Activated CD4-positive, alpha-beta memory T cell treated with anti-CD3 and anti-CD28 coated beads, Interleukin-2, amount 10 ng/mL, durations not matched to agents 7 days and 5 days (primary cell): ENCODE measurements at regions of chr16 and their contacts with region 1.

Region 1: GRCh38 chr16:25111403-25112166 is at the start of gene LCMT1:
- DNase-seq: peak; percentile 94
- H3K4me3 Mint-ChIP-seq: peak within 1 kb of the TSS; percentile 93
- H3K27ac Mint-ChIP-seq: peak within 1 kb of the TSS; percentile 97
- H3K4me1 Mint-ChIP-seq: peaks cover 60% of the 10 kb centered on the region
- H3K27me3 Mint-ChIP-seq: no peaks in the 10 kb centered on the region
- total RNA-seq, gene LCMT1: 39.0 to 50.7 TPM

Region 2: GRCh38 chr16:25031441-25032307 is 79.9 kb before region 1 on chr16:
- CTCF ChIA-PET with region 1: interaction called, 4 read pairs
- POLR2A ChIA-PET with region 1: interaction called, 14 read pairs
- DNase-seq: peak; percentile 93
- H3K4me3 Mint-ChIP-seq: peak overlapping the region; percentile 84
- H3K27ac Mint-ChIP-seq: peak overlapping the region; percentile 90
- H3K4me1 Mint-ChIP-seq: peaks cover 30% of the 10 kb centered on the region
- H3K27me3 Mint-ChIP-seq: no peaks in the 10 kb centered on the region

Region 3: DNA sequence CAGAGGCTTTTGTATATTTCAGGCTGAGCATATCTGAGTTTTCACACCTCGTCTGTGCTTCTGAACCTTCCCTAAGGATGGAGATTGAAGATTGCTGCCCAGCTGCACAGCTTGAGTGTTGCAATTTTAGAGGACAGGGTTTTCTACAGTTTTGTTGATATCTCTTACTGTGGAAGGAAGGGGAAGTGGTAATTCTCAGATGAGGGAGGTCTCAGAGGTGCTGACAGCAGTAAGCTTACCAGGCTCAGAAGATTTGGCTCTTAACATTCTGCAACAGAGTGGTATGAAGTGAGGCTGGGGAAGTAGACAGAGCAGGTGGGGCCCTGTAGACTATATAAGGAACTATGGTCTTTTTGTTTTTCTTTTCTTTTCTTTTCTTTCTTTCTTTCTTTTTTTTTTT is 50.7 kb before region 1 on chr16:
- CTCF ChIA-PET with region 1: interaction called, 20 read pairs
- POLR2A ChIA-PET with region 1: interaction called, 112 read pairs
- DNase-seq: peak; percentile 50
- H3K4me3 Mint-ChIP-seq: peak overlapping the region; percentile 56
- H3K27ac Mint-ChIP-seq: peak overlapping the region; percentile 93
- H3K4me1 Mint-ChIP-seq: peaks cover 45% of the 10 kb centered on the region
- H3K27me3 Mint-ChIP-seq: no peaks in the 10 kb centered on the region

Region 4: DNA sequence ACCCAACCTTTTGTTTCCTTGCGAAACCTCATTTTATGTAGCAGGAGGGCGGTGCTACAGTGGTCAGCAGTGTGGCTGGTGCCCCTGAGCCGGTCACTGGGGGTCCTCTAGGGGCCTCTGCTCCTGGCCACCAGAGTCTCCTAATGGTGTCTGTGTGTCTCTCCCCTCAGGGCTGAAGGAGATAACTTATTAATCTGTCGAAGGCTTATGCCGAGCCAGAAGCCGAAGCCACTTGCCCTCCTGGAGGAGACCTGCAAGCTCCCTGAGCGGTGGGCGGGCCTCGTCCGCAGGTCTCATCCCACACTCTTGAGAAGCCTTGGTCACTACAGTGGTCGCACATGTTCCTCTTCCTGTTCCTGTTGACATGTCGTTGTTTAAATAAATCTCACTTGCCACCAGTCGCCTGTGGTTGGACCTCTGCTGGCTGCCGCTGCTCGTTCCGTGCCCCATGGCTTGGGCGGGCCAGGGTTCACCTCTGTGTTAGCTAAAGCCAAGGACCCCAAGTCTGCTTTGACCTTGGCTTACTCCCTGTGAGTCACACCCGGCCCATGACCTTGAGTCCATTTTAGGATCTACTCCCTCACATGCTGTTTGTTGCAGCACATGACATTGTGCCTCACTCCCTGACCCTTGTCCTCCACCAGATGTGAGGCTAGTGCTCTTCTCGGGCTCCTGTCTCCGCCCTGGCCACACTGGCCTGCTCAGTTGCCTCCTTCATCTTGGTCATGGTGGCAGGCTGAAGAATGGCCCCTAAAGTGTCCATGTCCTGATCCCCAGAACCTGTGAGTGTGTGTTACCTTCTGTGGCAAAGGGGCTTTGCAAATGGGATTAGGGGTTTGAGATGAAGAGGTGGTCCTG is 66.5 kb after region 1 on chr16:
- CTCF ChIA-PET with region 1: no interaction called
- POLR2A ChIA-PET with region 1: no interaction called
- DNase-seq: no peak
- H3K4me3 Mint-ChIP-seq: no peak overlapping the region
- H3K27ac Mint-ChIP-seq: no peak overlapping the region
- H3K4me1 Mint-ChIP-seq: peaks cover 10% of the 10 kb centered on the region
- H3K27me3 Mint-ChIP-seq: no peaks in the 10 kb centered on the region

Region 5: GRCh38 chr16:25224731-25225319 is 113.2 kb after region 1 on chr16:
- CTCF ChIA-PET with region 1: interaction called, 26 read pairs
- POLR2A ChIA-PET with region 1: no interaction called
- DNase-seq: no peak
- H3K4me3 Mint-ChIP-seq: no peak overlapping the region
- H3K27ac Mint-ChIP-seq: no peak overlapping the region
- H3K4me1 Mint-ChIP-seq: no peaks in the 10 kb centered on the region
- H3K27me3 Mint-ChIP-seq: no peaks in the 10 kb centered on the region